PC-9 (cell line): ENCODE measurements at regions of chr7 and their contacts with region 1.

Region 1: GRCh38 chr7:116588641-116589594 is 64.1 kb downstream of the CAV1 start:
- DNase-seq: peak in 1 of 2 experiments; percentile 6
- H3K4me3 ChIP-seq: no peak overlapping the region
- H3K27ac ChIP-seq: no peak overlapping the region
- H3K4me1 ChIP-seq: peaks cover 14% of the 10 kb centered on the region
- H3K27me3 ChIP-seq: no peaks in the 10 kb centered on the region
- CTCF ChIP-seq: peak; percentile 94

Region 2: DNA sequence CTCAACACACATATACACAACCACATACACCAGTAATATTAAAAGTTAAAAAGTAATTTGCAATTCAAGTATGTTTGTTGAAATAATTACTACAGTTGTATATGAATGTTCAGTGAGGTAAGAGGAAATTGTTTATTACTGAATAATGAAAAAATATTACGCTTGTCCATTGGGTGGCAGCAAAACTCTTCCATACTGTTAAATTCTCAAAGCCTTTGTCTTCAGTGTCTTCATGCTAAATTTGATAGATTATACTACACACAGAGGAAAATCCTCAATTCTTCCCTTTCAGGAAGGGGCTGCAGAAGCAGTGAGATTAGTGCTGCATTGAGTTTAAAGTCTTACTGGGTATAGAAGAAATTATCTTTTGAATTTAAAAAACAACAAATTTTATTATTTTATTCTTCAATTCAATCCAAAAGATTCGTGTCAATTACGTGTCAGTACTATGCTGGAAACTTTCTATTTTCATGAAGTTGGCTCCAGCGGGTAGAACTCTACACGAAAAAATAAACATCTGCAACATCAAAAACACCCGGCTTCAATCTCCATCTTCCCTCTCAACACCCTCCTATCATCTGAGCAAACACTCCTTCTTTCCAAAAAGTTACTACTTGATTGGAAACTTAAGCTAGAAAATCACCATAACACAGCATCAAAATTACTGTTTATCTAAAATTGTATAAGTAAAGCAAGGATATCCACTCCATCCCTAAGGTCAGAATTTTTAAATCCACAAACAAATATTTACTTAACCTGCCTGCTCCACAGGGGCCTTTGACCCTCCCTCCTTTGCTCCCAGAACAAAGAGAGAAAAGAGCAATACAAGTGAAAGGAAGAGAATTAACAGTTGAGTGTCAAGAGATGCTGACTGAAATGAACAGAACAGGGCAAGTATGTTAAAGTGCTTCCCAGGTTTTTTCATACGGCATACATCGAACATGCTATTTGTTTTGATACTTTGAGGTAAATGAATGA is 415.6 kb before region 1 on chr7:
- CTCF ChIA-PET with region 1: interaction called, 7 read pairs
- POLR2A ChIA-PET with region 1: interaction called, 3 read pairs
- intact Hi-C with region 1: loop called (anchors 1 kb)
- DNase-seq: peak; percentile 26 to 48
- H3K4me3 ChIP-seq: no peak overlapping the region
- H3K27ac ChIP-seq: no peak overlapping the region
- H3K4me1 ChIP-seq: peaks cover 11% of the 10 kb centered on the region; the same call in 1 of the 2 replicates
- H3K27me3 ChIP-seq: no peaks in the 10 kb centered on the region
- CTCF ChIP-seq: peak; percentile 84

Region 3: DNA sequence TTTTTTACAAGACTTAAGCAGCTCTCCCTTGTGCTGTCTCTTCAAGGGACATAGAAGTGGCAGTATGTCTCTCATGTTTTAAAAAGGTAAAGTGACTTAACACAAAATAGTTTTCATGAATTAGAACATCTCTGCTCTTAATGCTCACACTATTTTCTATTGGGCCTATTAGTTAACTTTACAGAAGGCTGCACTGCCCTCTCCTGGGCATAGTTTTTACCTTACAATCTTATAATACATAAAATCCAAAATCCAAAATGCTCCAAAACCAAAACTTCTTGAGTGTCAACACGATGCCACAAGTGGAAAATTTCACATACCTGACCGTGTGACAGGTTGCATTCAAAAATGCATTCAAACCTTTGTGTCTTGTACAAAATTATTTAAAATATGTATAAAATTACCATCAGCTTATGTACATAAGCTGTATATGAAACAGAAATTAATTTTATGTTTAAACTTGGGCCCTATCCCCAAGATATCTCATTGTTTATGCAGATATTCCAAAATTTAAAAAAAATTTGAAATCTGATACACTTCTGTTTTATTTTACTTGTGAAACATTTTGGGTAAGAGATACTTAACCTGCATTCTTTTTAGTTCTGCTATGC is 352.8 kb before region 1 on chr7:
- CTCF ChIA-PET with region 1: interaction called, 5 read pairs
- POLR2A ChIA-PET with region 1: no interaction called
- intact Hi-C with region 1: loop called (anchors 1 kb)
- DNase-seq: no peak
- H3K4me3 ChIP-seq: no peak overlapping the region
- H3K27ac ChIP-seq: 0 out of 2 replicates have a peak overlapping the region, but pooled peaks have one; percentile 23
- H3K4me1 ChIP-seq: peaks cover 24% of the 10 kb centered on the region
- H3K27me3 ChIP-seq: no peaks in the 10 kb centered on the region
- CTCF ChIP-seq: peak; percentile 76

Region 4: DNA sequence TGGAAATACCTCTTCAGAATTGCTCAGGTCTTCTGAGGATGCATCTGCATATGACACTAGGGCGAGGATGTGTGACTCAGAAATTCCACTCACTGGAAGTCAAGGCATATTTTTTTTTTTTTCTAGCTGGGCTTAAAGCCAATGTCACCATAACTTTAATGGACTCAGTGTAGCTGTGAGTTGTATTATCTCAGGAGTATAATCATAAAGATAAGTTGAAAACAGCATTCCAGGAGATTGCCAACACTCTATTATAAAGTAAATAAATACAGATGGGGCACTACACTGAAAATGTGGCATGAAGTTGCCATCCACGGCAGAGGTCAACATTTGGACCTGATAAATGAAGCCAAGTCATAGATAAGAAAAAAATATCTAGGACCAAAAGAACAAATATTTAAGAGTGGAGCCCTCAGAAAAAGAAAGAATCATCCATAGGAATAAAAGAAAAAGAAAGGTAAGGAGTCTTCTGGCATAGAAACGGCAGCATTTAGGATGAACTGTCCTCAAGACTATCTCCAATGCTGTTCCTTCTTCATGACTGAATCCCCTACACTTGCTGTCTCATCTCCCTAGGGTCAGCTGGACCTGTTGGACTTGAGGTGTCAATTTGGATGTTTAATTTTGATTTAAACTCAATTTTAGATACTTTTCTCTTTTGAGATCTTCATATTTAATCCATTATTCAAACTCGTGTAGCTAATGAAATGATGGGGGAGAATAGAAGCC is 162.3 kb before region 1 on chr7:
- CTCF ChIA-PET with region 1: no interaction called
- POLR2A ChIA-PET with region 1: interaction called, 3 read pairs
- intact Hi-C with region 1: loop called (anchors 10 kb)
- DNase-seq: peak; percentile 56 to 91
- H3K4me3 ChIP-seq: no peak overlapping the region
- H3K27ac ChIP-seq: peak overlapping the region; percentile 59
- H3K4me1 ChIP-seq: peaks cover 26% of the 10 kb centered on the region
- H3K27me3 ChIP-seq: no peaks in the 10 kb centered on the region
- CTCF ChIP-seq: no peak

Region 5: DNA sequence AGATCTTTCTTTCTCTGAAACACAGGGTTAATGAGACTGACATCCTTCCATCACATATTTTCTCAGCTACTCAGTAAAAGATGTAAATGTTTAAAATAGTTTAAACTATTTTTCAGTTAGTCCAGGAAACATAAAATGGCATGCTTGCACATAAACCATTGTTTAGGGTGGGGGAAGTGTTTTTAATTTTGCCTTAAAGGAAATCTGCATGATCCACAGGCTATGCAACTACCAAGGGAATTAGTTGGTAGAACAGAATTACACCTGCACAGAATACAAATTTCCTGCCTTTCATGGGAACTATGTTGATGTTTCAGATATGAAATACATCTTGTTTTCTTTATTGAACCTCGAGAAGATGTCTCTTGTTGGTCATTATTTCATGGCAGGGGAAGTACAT is 53.5 kb before region 1 on chr7:
- CTCF ChIA-PET with region 1: no interaction called
- POLR2A ChIA-PET with region 1: no interaction called
- intact Hi-C with region 1: no loop called
- DNase-seq: no peak
- H3K4me3 ChIP-seq: no peak overlapping the region
- H3K27ac ChIP-seq: no peak overlapping the region
- H3K4me1 ChIP-seq: peaks cover under 1% of the 10 kb centered on the region; the same call in 1 of the 2 replicates
- H3K27me3 ChIP-seq: no peaks in the 10 kb centered on the region
- CTCF ChIP-seq: no peak

Region 6: DNA sequence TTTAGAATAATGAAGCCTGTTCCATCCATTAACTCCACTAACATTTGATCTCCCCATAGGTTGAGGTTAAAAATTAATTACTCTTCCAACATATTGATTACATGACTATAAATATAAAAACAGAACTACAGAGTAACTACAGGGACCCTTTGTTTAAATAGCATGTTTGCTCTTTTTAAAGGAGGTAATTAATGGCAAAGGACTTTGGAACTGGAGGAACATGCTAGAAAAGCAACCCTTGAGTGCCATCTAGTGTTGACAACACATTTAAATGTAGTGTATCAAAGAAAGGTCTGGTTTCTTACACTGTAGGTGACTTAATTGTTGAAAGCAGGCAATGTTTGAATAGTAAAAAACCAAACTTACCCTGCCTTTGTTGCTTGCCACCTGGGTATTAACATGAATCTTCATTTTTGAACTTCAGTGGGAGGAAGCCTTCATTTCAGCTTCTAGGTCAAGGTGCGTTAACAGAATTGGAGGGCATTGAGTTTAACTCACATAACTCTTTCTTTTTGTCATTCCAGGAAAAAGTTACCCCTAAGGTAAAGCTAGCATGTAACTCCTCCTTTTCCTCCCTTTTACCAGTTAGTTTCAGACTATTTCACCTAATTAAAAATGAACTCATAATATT is 220.8 kb after region 1 on chr7:
- CTCF ChIA-PET with region 1: interaction called, 4 read pairs
- POLR2A ChIA-PET with region 1: no interaction called
- intact Hi-C with region 1: loop called (anchors 1 kb)
- DNase-seq: peak; percentile 31 to 71
- H3K4me3 ChIP-seq: peak overlapping the region; percentile 25; the same call in 1 of the 2 replicates
- H3K27ac ChIP-seq: peak overlapping the region; percentile 81
- H3K4me1 ChIP-seq: peaks cover 44% of the 10 kb centered on the region
- H3K27me3 ChIP-seq: no peaks in the 10 kb centered on the region
- CTCF ChIP-seq: peak; percentile 87

Region 7: GRCh38 chr7:117401293-117402002 is 812.5 kb after region 1 on chr7:
- CTCF ChIA-PET with region 1: no interaction called
- POLR2A ChIA-PET with region 1: no interaction called
- intact Hi-C with region 1: no loop called
- DNase-seq: no peak
- H3K4me3 ChIP-seq: no peak overlapping the region
- H3K27ac ChIP-seq: no peak overlapping the region
- H3K4me1 ChIP-seq: no peaks in the 10 kb centered on the region
- H3K27me3 ChIP-seq: no peaks in the 10 kb centered on the region
- CTCF ChIP-seq: peak; percentile 25; the same call in 1 of the 2 replicates